Activated T-helper 1 cell treated with anti-CD3 and anti-CD28 coated beads, Interleukin-12 subunit alpha, Interleukin-12 subunit beta, Interleukin-2, Interleukin-4 antibody, amounts not matched to agents 30 ng/mL and 10 ng/mL and 1 ng/mL, durations not matched to agents 14 hours and 24 hours and 36 hours (primary cell): ENCODE measurements at regions of chrX and their contacts with region 1.

Region 1: DNA sequence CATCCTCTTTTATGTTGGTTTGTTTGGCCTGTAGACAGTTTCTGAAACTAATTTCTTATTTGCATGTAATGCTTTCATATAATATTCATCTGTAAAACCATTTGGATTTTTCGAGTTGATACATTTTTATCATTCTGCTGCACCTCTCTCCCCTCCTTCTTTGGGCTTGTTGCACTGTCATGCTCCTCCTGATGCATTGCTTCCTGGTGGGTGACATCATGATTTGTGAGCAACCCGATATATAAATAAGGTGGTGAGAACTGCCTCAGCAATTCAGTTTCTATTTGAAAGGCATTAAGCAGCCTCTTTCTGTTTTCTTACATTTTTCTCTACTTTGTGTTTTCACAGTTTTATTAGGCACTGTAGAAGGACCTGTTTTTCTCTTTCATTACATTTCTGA is 515.7 kb downstream of the RPA4 start:
- DNase-seq: no peak
- H3K4me3 Mint-ChIP-seq: peak overlapping the region; percentile 33
- H3K27ac Mint-ChIP-seq: peak overlapping the region; percentile 86
- H3K4me1 Mint-ChIP-seq: peaks cover 50% of the 10 kb centered on the region
- H3K27me3 Mint-ChIP-seq: no peaks in the 10 kb centered on the region

Region 2: DNA sequence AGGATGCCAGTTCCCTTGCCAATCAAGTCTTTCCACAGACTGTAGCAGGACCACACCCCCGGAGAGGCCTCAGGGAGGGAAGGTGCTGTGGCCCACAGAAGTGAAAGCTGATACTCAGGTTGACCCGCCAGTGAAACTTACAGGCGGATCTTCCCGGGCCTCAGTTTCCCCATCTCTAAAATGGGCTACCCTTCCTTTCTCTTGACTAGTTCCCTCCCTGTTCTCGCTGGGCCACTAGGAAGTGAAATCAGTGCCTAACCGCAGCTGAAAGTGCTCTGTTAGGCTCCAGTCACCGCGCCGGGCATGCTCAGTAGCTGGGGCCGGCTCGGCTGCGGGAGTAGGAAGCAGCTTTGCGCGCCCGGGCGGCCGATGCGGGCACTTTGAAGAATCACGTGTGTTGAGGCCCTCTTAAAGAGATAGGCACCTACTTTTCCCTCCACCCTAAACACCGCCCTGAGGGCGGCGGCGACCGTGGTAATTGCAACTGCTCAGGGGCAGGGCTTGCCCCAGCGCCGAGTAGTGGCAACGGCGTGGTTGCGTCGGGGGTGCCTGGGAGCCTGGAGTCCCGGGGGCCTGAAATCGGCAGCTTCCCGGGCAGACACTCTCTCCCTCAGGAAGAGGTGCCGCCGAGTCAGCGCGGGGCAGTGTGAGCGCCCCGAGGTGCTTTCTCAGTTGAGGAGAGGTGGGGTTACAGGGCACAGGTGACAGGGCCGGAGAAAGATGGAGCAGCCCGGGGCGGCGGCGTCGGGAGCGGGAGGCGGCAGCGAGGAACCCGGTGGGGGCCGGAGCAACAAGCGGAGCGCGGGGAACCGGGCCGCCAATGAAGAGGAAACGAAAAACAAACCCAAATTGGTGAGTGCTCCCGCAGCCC is 714.8 kb before region 1 on chrX and contains the start of gene DIAPH2:
- intact Hi-C with region 1: loop called (anchors 5 kb)
- DNase-seq: peak; percentile 69
- H3K4me3 Mint-ChIP-seq: peak within 1 kb of the TSS; percentile 94
- H3K27ac Mint-ChIP-seq: peak within 1 kb of the TSS; percentile 95
- H3K4me1 Mint-ChIP-seq: peaks cover 36% of the 10 kb centered on the region
- H3K27me3 Mint-ChIP-seq: no peaks in the 10 kb centered on the region
- total RNA-seq, gene DIAPH2: 10.8 and 11.6 TPM in 2 replicates

Region 3: GRCh38 chrX:97057349-97058026 is 341.9 kb before region 1 on chrX:
- intact Hi-C with region 1: loop called (anchors 10 kb)
- DNase-seq: no peak
- H3K4me3 Mint-ChIP-seq: no peak overlapping the region
- H3K27ac Mint-ChIP-seq: no peak overlapping the region
- H3K4me1 Mint-ChIP-seq: no peaks in the 10 kb centered on the region
- H3K27me3 Mint-ChIP-seq: no peaks in the 10 kb centered on the region

Region 4: GRCh38 chrX:97446298-97446882 is 47.0 kb after region 1 on chrX:
- intact Hi-C with region 1: loop called (anchors 1 kb)
- DNase-seq: no peak
- H3K4me3 Mint-ChIP-seq: no peak overlapping the region
- H3K27ac Mint-ChIP-seq: no peak overlapping the region
- H3K4me1 Mint-ChIP-seq: no peaks in the 10 kb centered on the region
- H3K27me3 Mint-ChIP-seq: peaks cover 2% of the 10 kb centered on the region

Region 5: DNA sequence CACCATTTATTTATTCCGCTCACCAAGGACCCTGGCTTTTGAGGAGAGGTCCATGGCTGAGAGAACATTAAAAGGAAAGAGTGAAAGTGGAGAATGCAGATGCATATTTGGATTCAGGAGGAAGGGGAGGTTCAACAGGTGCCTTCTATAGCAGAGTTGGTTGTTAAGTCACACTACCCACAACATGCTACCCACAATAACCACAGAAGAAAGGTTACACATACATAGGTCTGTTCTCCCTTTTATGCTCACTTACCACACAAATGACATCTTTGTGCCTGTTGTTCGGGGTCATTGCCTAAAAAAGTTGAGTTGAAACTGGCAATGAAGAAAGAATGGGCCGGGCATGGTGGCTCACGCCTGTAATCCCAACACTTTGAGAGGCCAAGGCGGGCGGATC is 71.7 kb after region 1 on chrX:
- intact Hi-C with region 1: no loop called
- DNase-seq: no peak
- H3K4me3 Mint-ChIP-seq: no peak overlapping the region
- H3K27ac Mint-ChIP-seq: no peak overlapping the region
- H3K4me1 Mint-ChIP-seq: no peaks in the 10 kb centered on the region
- H3K27me3 Mint-ChIP-seq: no peaks in the 10 kb centered on the region

Region 6: DNA sequence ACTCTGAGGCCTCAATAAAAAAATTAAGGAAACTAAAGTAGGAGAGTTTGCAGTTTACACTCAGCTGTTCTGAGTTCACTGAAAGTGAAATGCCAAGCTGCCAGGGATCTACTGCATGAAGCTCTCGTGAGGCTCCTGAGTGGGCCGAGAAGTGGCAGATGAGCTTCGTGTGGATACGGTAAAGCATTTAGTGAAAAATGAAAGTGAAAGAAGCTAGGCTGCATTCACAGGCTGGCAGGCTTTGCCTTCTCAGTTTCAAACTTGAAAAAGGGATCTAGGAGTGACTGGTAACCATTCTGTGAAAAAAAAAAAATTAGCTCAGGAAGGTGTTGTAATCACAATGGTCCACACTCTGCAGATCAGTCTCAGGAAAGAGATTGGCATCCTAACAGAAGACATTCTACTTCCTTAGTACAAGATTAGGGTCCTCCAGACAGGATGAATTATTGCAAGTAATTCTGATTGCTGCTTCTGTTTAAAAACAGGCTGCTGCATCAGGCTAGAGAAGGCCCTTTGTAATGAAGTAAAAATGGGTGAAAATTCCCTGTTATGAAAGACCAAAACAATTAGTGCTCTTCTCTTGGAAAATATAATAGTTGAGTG is 164.2 kb after region 1 on chrX:
- intact Hi-C with region 1: loop called (anchors 1 kb)
- DNase-seq: peak; percentile 28
- H3K4me3 Mint-ChIP-seq: peak overlapping the region; percentile 55
- H3K27ac Mint-ChIP-seq: peak overlapping the region; percentile 62
- H3K4me1 Mint-ChIP-seq: peaks cover 8% of the 10 kb centered on the region
- H3K27me3 Mint-ChIP-seq: no peaks in the 10 kb centered on the region